Dorsolateral prefrontal cortex (tissue), 120 donors: ENCODE measurements at regions of chr6 and their contacts with region 1.

Region 1: GRCh38 chr6:148947621-148948444 is 201.0 kb downstream of the UST start:
- DNase-seq: peak; percentile 66 to 93 (median 85)
- H3K4me3 ChIP-seq: no peak overlapping the region
- H3K27ac ChIP-seq: peak overlapping the region in 1 of 59 donors; percentile 3
- H3K27me3 ChIP-seq: no peaks in the 10 kb centered on the region
- CTCF ChIP-seq: peak; percentile 81 to 98 (median 94)

Region 2: GRCh38 chr6:148559848-148560433 is 387.9 kb before region 1 on chr6:
- intact Hi-C with region 1: loop called in 1 of 2 experiments (anchors 5 kb)
- DNase-seq: peak; percentile 71 to 91 (median 77)
- H3K4me3 ChIP-seq: peak overlapping the region; percentile 47 to 85 (median 66)
- H3K27ac ChIP-seq: peak overlapping the region in 39 of 59 donors; percentile 7 to 86 (median 59)
- H3K27me3 ChIP-seq: no peaks in the 10 kb centered on the region
- CTCF ChIP-seq: peak; percentile 90 to 99 (median 97)

Region 3: GRCh38 chr6:148746363-148747144 is 201.3 kb before region 1 on chr6 and contains the start of gene UST:
- intact Hi-C with region 1: loop called (anchors 5 kb)
- DNase-seq: peak in 7 of 10 donors; percentile 34 to 59 (median 49)
- H3K4me3 ChIP-seq: peak within 1 kb of the TSS; percentile 41 to 89 (median 76)
- H3K27ac ChIP-seq: peak within 1 kb of the TSS in 55 of 59 donors; percentile 11 to 87 (median 68)
- H3K27me3 ChIP-seq: peaks cover 0 to 7% (median 0%) of the 10 kb centered on the region in 45 donors
- CTCF ChIP-seq: peak in 49 of 56 donors; percentile 14 to 63 (median 38)
- total RNA-seq, gene UST: 5.0 to 18.6 (median 9.4) TPM

Region 4: DNA sequence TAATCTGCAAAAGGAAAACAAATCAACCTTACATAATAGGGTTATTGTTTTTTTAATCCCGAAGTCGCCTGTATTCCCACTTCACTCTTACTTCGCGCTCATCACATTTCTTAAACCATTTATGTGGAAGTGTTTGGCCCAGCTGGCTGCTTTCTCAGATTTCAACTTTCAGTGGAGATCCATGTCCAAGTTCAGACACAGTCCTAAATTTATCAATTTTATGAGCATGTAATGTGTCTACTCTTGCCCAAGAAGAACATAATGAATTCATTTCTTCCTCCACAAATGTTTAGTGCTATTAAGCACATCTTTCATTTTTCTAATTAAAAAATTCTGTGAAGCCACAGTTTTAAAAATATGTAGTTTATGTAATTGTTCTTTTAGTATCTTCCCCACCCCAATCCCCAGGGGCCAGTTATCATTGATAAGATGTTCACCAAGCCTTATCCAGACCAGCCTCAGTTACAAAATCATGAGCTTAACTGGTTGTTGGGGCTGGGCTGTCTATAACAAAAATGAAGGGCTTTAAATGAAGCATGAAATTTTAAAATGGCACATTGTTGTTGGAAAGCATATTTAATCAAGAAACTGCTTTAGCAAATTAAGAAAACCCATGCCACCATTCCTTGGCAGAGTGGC is 49.3 kb before region 1 on chr6:
- intact Hi-C with region 1: no loop called
- DNase-seq: no peak
- H3K4me3 ChIP-seq: no peak overlapping the region
- H3K27ac ChIP-seq: no peak overlapping the region
- H3K27me3 ChIP-seq: no peaks in the 10 kb centered on the region
- CTCF ChIP-seq: no peak